Activated T-helper 1 cell treated with anti-CD3 and anti-CD28 coated beads, Interleukin-12 subunit alpha, Interleukin-12 subunit beta, Interleukin-2, Interleukin-4 antibody, amounts not matched to agents 30 ng/mL and 10 ng/mL and 1 ng/mL, durations not matched to agents 14 hours and 24 hours and 36 hours (primary cell): ENCODE measurements at regions of chr10 and their contacts with region 1.

Region 1: DNA sequence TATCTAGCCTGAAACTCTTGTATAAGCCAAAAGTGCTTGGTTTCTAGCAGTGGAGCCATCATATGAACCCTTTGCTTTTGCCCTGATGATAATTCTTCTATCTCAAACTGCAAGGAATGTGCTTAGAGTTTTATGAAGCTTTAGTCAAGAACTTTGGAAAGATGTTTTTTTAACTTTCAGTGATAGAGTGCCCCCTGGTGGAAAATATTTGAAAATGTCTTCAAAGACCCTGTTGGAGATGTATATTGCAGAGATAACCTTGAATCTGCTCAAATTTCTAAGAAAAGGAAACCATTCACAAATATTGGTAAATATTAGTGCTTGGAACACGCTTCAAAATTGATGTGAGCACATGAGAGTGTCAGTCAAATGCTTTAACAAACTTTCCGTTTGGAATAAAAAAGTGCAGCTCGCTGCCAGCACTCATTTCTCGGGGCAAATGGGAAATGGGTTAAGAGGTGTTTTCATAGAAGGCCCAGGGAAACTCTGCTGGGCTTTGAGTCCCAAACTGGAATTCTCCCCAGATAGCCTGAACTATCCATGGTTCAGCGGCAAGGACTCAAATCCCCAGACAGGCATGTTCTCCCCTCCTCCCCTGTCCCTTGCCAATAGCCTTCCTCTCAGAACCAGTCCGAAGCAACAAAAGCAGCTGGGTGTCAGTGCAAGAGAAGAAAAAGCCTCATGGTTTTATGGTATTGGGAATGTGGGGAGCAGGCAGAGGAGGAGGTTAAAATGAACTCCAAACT is 129.3 kb downstream of the MYOF start:
- DNase-seq: no peak
- H3K4me3 Mint-ChIP-seq: no peak overlapping the region
- H3K27ac Mint-ChIP-seq: no peak overlapping the region
- H3K4me1 Mint-ChIP-seq: peaks cover 3% of the 10 kb centered on the region
- H3K27me3 Mint-ChIP-seq: peaks cover 2% of the 10 kb centered on the region

Region 2: GRCh38 chr10:93080350-93081046 is 272.3 kb before region 1 on chr10:
- intact Hi-C with region 1: loop called (anchors 1 kb)
- DNase-seq: peak; percentile 23
- H3K4me3 Mint-ChIP-seq: no peak overlapping the region
- H3K27ac Mint-ChIP-seq: no peak overlapping the region
- H3K4me1 Mint-ChIP-seq: peaks cover 5% of the 10 kb centered on the region
- H3K27me3 Mint-ChIP-seq: peaks cover 49% of the 10 kb centered on the region

Region 3: DNA sequence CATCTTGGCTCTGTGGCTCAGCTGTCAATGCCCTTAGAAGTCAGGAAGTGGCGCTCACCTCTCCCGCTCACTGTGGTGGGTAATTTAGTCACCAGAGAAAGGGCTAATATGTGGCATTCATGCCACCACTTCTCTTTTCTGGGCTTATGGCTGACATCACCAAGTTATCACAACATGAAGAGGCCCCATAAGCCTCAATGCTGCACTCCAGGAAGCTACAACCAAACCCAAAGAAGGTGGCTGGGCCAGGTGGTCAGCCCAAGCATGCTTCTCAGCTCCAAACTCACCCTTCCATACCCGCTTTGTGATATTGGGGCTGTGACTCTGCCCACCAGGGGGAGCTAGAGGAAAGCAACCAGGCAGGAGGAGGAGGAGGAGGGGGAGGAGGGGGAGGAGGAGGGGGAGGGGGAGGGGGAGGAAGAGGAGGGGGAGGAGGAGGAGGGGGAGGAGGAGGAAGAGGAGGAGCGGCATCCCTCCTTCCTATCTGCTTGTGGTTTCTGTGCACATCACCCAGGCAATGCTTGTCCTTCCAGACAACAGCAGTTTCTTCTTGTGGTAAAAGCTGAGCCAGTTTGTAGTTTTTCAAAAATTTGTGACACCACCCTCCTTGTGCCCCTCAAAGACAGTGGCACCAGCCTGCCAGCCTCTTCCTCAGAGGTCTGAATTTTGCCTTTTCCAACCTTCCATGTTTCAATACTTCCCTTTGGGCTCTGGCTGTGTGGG is 237.0 kb before region 1 on chr10:
- intact Hi-C with region 1: loop called (anchors 1 kb)
- DNase-seq: peak; percentile 35
- H3K4me3 Mint-ChIP-seq: no peak overlapping the region
- H3K27ac Mint-ChIP-seq: no peak overlapping the region
- H3K4me1 Mint-ChIP-seq: no peaks in the 10 kb centered on the region
- H3K27me3 Mint-ChIP-seq: peaks cover 8% of the 10 kb centered on the region